ENCODE measurements at regions of chr21 and their contacts with region 1.

Region 1: DNA sequence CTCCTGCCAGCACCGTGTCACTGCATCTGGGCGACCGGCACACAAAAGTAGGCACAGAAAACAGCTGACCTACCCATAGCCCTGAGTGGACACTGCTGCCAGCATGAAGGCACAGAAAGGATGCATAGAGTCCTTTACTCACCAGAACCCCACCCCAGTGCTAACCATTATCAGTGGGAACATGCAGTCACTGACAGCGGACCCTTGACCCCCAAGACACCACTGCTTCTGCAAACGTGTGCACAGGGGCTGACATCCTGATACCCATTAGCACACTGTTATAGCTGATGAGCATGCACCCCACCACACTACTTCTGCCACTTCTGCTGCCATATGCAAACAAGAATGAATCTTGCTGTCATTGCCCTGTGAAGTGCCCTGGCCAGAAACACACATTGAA is 953.0 kb upstream of the NCAM2 start:
- DNase-seq: no peak
- ATAC-seq: no peak
- H3K4me3 ChIP-seq: no peak overlapping the region
- H3K27ac ChIP-seq: no peak overlapping the region
- H3K4me1 ChIP-seq: no peaks in the 10 kb centered on the region
- H3K27me3 ChIP-seq: no peaks in the 10 kb centered on the region
- CTCF ChIP-seq: no peak
- POLR2A ChIP-seq: no peak
- RAD21 ChIP-seq: no peak

Region 2: DNA sequence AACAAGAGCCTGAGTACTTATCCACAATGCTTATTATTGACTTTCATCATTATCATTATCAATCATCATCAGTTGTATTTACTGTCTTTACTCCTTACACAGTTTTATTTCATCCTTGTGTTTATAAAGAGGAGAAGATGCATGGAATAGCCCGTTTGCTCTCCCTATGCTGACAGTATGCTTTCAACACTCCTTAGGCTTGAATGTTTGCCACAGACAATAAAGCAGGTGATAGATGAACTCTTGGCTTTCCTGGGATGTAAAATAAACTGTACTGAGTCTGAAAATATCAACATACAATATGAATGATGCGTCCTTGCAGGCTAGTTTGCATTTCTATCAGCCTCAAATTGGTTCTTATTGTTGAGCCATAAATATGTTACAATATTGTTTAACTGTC is 61.2 kb after region 1 on chr21:
- CTCF ChIA-PET with region 1: no interaction called
- POLR2A ChIA-PET with region 1: no interaction called
- dilution Hi-C with region 1: no loop called
- in situ Hi-C with region 1: no loop called
- intact Hi-C with region 1: loop called (anchors 2 kb)
- DNase-seq: no peak
- ATAC-seq: no peak
- H3K4me3 ChIP-seq: no peak overlapping the region
- H3K27ac ChIP-seq: no peak overlapping the region
- H3K4me1 ChIP-seq: no peaks in the 10 kb centered on the region
- H3K27me3 ChIP-seq: no peaks in the 10 kb centered on the region
- CTCF ChIP-seq: no peak
- POLR2A ChIP-seq: no peak
- RAD21 ChIP-seq: no peak